Spleen (tissue), 13 donors: ENCODE measurements at regions of chr7 and their contacts with region 1.

Region 1: DNA sequence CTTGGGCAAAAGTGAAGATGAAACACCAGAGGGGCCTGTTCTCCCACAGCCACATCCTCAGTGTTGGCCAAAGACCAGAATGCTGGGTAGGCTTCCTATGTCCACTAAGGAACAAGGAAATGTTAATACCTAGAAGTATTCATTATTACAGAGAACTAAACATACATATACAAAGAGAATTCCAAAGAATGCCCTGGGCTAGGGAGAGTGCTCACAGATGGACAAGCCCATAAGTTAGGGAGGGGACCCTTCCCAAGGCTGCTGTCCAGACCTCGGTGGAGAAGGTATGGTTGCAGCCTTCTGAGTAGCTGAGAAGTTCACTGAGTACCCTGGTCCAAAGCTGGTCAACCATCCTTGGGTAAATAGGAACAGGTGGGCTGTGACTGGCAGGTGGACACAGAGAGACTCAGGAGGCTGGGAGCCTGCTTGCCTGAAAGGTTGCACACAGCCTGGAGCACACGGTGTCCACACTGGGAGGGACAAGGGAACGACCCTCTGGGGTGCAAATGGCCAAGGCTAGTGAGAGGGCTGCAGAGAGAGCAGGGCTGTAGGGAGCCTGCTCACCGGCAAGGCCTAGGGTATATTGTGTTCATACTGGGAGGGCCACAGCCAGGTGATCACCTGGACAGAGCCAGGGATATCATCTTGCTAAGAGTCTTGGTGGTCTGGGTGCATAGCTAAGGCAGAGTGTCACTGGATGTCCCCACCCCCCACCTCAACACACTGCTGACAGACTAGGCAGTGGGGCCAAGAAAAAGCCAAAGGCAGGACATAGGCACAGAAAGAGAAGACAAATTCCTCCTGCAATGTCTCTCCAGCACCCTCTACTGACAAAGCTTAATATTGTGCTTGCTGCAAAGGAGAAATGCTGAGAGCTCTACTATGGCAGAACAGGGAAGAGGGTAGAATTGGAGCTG is 40.3 kb downstream of the CPVL start:
- DNase-seq: no peak
- H3K4me3 ChIP-seq: no peak overlapping the region
- H3K27ac ChIP-seq: no peak overlapping the region
- H3K4me1 ChIP-seq: peaks cover 0 to 42% (median 21%) of the 10 kb centered on the region in 6 donors
- H3K27me3 ChIP-seq: no peaks in the 10 kb centered on the region
- CTCF ChIP-seq: peak; percentile 42 to 88 (median 67)
- POLR2A ChIP-seq: no peak

Region 2: DNA sequence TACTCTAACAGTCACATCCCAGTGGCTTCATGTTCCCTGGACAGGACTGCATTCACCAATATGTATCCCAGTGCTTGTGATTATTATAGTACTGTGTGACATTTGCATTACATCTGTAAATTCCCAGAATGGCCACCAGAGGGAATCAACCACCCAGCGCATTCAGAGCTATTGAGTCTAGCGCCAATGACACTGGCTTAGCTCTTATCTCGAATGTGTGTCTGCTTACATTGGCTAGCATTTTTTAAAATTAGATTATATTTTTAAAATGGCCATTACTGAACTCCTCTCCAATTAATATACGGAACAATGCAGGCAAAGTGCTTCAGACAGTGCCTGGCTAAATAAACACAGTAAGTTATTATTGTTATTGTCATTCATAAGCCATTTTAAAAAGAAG is 184.2 kb before region 1 on chr7:
- intact Hi-C with region 1: loop called (anchors 5 kb)
- DNase-seq: no peak
- H3K4me3 ChIP-seq: no peak overlapping the region
- H3K27ac ChIP-seq: no peak overlapping the region
- H3K4me1 ChIP-seq: peaks cover 8 to 27% (median 23%) of the 10 kb centered on the region in 6 donors
- H3K27me3 ChIP-seq: no peaks in the 10 kb centered on the region
- CTCF ChIP-seq: peak; percentile 47 to 87 (median 76)
- POLR2A ChIP-seq: no peak

Region 3: DNA sequence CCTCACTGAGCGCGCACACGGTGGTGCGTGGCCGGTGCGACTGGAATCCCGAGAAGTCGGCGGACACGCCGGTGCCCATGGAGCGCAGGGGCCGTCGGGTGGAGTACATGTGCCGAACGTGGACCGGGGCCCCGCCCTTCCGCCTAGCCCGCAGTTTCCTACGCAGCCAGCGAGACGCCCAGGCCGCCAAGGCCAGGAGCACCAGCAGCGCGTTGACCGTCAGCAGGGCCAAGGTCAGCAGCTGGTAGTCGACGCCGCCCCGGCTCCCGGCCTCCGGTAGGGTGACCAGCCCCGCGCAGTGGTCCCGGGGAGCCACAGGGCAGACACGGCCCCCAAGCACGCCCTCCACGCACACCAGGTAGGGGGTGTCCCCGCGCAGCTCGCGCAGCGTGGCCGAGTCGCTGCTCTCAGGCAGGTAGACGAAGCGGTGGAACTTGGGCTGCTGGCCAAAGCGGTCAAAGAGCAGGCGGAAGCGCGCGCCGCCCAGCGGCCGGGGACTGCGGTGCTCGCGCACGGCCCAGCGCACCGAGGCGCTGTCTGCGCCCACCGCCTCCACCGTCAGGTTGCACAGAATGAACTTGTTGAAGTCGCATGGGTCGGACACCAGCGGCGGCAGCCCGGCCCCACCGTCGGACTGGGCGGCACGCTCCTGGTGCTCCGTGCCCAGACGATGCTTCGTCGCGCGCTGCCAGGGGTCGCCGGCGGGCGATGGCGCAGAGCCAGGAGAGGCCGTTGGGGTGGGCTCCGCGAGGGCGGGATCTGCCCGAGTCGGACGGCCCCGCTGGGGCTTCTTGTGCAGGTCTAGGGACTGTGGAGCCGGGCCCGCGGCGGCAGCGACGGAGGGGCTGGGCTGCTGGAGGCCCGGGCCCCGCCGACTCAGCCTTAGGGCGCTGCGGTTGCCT is 150.0 kb before region 1 on chr7:
- intact Hi-C with region 1: loop called (anchors 10 kb)
- DNase-seq: peak; percentile 90
- H3K4me3 ChIP-seq: peak overlapping the region; percentile 23 to 77 (median 48)
- H3K27ac ChIP-seq: peak overlapping the region; percentile 72 to 89 (median 86)
- H3K4me1 ChIP-seq: peaks cover 16 to 69% (median 47%) of the 10 kb centered on the region in 6 donors
- H3K27me3 ChIP-seq: peaks cover 10 to 67% (median 39%) of the 10 kb centered on the region in 7 donors
- CTCF ChIP-seq: peak; percentile 29 to 84 (median 65)
- POLR2A ChIP-seq: no peak

Region 4: DNA sequence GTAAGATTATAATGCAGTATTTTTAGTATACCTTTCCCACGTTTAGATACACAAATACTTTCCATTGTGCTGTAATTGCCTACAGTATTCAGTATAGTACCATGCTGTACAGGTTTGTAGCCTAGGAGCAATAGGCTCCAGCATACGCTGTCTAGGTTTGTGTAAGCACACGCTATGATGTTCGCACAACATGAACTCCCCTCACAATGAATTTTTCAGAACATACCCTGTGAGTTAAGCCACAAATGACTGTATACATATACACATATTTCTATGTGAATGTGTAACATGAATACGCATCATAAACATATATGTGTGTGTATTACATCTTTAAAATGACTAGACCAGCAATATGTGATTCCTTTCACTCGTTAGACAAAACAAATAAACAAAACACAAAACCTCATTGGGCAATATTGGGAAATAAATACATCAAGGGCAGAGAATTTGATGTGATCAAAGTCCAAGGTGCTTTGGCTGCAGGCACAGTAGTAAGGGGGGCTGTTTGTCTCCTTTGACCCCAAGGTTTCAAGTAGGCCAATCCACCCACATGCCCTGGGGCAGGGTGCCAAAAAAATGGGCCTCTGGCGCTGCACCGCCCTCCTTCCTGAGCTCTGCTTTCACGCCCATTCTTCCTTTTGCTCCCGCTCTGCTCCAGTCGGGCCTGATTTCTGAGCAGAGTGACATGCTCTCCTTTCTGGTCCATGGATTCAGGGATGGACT is 122.4 kb after region 1 on chr7:
- intact Hi-C with region 1: no loop called
- DNase-seq: no peak
- H3K4me3 ChIP-seq: no peak overlapping the region
- H3K27ac ChIP-seq: no peak overlapping the region
- H3K4me1 ChIP-seq: no peaks in the 10 kb centered on the region
- H3K27me3 ChIP-seq: no peaks in the 10 kb centered on the region
- CTCF ChIP-seq: no peak
- POLR2A ChIP-seq: no peak